Activated B cell treated with CpG ODN at 0.5 μM for 24 hours (primary cell): ENCODE measurements at regions of chr6 and their contacts with region 1.

Region 1: GRCh38 chr6:157667211-157668008 is 155.6 kb upstream of the SNX9 start:
- DNase-seq: no peak
- ATAC-seq: peak; percentile 84
- H3K4me3 Mint-ChIP-seq: peak overlapping the region; percentile 48
- H3K27ac Mint-ChIP-seq: peak overlapping the region; percentile 33
- H3K4me1 Mint-ChIP-seq: peaks cover 10% of the 10 kb centered on the region
- H3K27me3 Mint-ChIP-seq: no peaks in the 10 kb centered on the region
- CTCF ChIP-seq: peak; percentile 72

Region 2: GRCh38 chr6:157323255-157323965 is 344.0 kb before region 1 on chr6 and contains the start of gene TMEM242:
- CTCF ChIA-PET with region 1: interaction called, 16 read pairs
- POLR2A ChIA-PET with region 1: interaction called, 7 read pairs
- intact Hi-C with region 1: loop called (anchors 2 kb)
- DNase-seq: peak; percentile 90
- ATAC-seq: peak; percentile 94
- H3K4me3 Mint-ChIP-seq: peak within 1 kb of the TSS; percentile 96
- H3K27ac Mint-ChIP-seq: peak within 1 kb of the TSS; percentile 92
- H3K4me1 Mint-ChIP-seq: peaks cover 19% of the 10 kb centered on the region
- H3K27me3 Mint-ChIP-seq: peaks cover 16% of the 10 kb centered on the region
- CTCF ChIP-seq: no peak
- total RNA-seq, gene TMEM242: 16.1 and 17.6 TPM in 2 replicates

Region 3: GRCh38 chr6:157614026-157614568 is 53.3 kb before region 1 on chr6:
- CTCF ChIA-PET with region 1: interaction called, 18 read pairs
- POLR2A ChIA-PET with region 1: no interaction called
- intact Hi-C with region 1: no loop called
- DNase-seq: no peak
- ATAC-seq: peak; percentile 74
- H3K4me3 Mint-ChIP-seq: peak overlapping the region; percentile 41
- H3K27ac Mint-ChIP-seq: peak overlapping the region; percentile 85
- H3K4me1 Mint-ChIP-seq: peaks cover 67% of the 10 kb centered on the region
- H3K27me3 Mint-ChIP-seq: no peaks in the 10 kb centered on the region
- CTCF ChIP-seq: no peak

Region 4: GRCh38 chr6:157873735-157874344 is 206.4 kb after region 1 on chr6:
- CTCF ChIA-PET with region 1: interaction called, 14 read pairs
- POLR2A ChIA-PET with region 1: no interaction called
- intact Hi-C with region 1: loop called (anchors 5 kb)
- DNase-seq: peak; percentile 73
- ATAC-seq: peak; percentile 87
- H3K4me3 Mint-ChIP-seq: no peak overlapping the region
- H3K27ac Mint-ChIP-seq: no peak overlapping the region
- H3K4me1 Mint-ChIP-seq: peaks cover 26% of the 10 kb centered on the region
- H3K27me3 Mint-ChIP-seq: no peaks in the 10 kb centered on the region
- CTCF ChIP-seq: peak; percentile 63